Testis (tissue), 5 donors: ENCODE measurements at regions of chr5 and their contacts with region 1.

Region 1: GRCh38 chr5:81194633-81195333 is 38.3 kb upstream of the CKMT2 start:
- DNase-seq: peak; percentile 90
- H3K4me3 ChIP-seq: no peak overlapping the region
- H3K27ac ChIP-seq: no peak overlapping the region
- H3K4me1 ChIP-seq: peaks cover 7% of the 10 kb centered on the region
- H3K27me3 ChIP-seq: no peaks in the 10 kb centered on the region
- CTCF ChIP-seq: peak; percentile 62 to 89 (median 79)
- POLR2A ChIP-seq: no peak

Region 2: GRCh38 chr5:80686757-80687156 is 508.0 kb before region 1 on chr5:
- intact Hi-C with region 1: loop called (anchors 10 kb)
- DNase-seq: no peak
- H3K4me3 ChIP-seq: no peak overlapping the region
- H3K27ac ChIP-seq: no peak overlapping the region
- H3K4me1 ChIP-seq: no peaks in the 10 kb centered on the region
- H3K27me3 ChIP-seq: no peaks in the 10 kb centered on the region
- CTCF ChIP-seq: peak in 2 of 3 experiments; percentile 28 to 46
- POLR2A ChIP-seq: no peak